ENCODE measurements at regions of chr4 and their contacts with region 1.

Region 1: GRCh38 chr4:169723207-169723965 is 34.4 kb downstream of the HPF1 start:
- DNase-seq: no peak
- ATAC-seq: peak; percentile 38

Region 2: GRCh38 chr4:169668069-169668721 is 55.2 kb before region 1 on chr4:
- intact Hi-C with region 1: no loop called
- DNase-seq: no peak
- ATAC-seq: peak; percentile 67

Region 3: DNA sequence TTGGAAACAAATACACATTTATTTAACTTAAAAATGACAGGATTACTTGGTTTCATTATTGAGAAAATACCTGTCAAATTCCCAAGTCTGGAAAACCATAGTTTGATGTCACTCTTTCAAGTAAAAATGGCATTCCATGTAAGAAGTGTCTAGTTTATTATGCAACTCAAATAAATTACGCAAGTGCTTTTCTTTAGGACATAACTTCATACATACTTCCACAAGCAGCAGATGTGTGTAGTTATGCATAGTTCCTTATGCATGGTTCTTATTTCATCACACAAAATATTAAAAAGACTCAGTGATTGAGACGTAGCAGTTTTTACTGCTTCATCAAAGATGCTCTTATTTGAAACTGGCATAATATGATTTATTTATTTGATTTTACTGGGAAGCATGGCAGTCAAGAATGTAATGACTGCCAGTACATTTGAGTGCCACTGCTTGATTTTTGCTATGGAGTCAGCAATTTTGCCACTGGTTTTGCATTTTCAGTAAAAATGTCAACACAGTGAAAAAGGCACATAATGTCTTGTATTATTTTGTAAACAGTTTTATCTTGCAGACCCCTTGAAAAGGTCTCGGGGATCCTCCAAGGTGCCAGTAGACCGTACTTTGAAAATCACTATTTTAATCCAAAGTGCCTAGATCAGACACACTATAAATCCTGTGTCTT is 40.9 kb before region 1 on chr4:
- intact Hi-C with region 1: loop called in 1 of 2 experiments (anchors 5 kb)
- DNase-seq: no peak
- ATAC-seq: no peak